ENCODE measurements at regions of chr1 and their contacts with region 1.

Region 1: GRCh38 chr1:150256554-150257341 is 826 bp upstream of the CA14 start:
- DNase-seq: no peak
- H3K4me3 ChIP-seq: no peak overlapping the region
- H3K27ac ChIP-seq: peak overlapping the region; percentile 33 to 64
- H3K4me1 ChIP-seq: peaks cover 4% of the 10 kb centered on the region
- H3K27me3 ChIP-seq: peaks cover 3% of the 10 kb centered on the region
- CTCF ChIP-seq: no peak
- POLR2A ChIP-seq: no peak

Region 2: GRCh38 chr1:150280138-150280707 is 23.5 kb after region 1 on chr1:
- intact Hi-C with region 1: loop called (anchors 1 kb)
- DNase-seq: no peak
- H3K4me3 ChIP-seq: no peak overlapping the region
- H3K27ac ChIP-seq: peak overlapping the region; percentile 73 to 81
- H3K4me1 ChIP-seq: peaks cover 6% of the 10 kb centered on the region
- H3K27me3 ChIP-seq: no peaks in the 10 kb centered on the region
- CTCF ChIP-seq: no peak
- POLR2A ChIP-seq: no peak

Measured in prostate gland (tissue), 2 donors.